ENCODE measurements at regions of chr16 and their contacts with region 1.

Region 1: DNA sequence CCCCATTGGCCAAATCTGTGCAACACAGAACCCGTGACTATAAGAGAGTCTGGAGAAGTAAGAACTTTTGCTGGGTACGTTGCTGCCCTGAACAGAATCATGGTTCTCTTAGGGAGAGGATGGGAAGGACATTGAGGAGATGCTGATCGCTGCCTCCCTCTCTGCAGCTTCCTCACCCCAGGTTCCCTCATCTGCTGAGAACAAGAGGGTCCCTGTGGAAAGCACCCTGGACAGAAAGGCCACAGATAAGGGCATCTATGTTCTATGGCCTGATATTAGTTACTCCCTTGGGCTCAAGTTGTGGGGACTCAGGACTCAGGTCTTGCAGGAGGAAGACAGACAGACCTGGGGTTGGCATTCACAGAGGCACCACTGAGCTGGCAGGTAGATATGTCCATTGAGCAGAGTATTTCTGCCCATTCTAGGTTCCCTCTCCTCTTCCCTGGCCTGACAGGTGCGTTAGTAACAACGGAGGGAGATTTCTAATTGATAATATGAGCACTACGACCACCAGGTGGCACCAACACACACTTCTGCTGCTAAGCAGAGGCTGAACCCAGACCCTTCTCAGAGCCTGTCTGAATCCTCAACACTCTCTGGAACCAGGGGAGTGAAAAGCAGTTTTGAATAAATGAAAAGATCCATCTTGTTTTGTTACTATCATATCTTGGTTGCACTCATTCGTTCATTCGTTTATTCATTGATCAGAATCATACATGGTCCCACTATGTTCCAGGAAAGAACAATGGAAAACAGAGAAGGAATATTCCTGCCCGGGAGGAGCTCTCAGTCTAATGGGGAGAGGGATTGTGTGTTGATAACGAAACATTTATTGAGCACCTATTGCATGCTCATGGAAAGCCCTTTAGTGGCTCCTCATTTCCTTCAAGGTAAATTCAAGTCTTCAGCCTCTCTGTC is 56.4 kb downstream of the SLC6A2 start:
- DNase-seq: peak; percentile 78
- ATAC-seq: peak; percentile 81

Region 2: DNA sequence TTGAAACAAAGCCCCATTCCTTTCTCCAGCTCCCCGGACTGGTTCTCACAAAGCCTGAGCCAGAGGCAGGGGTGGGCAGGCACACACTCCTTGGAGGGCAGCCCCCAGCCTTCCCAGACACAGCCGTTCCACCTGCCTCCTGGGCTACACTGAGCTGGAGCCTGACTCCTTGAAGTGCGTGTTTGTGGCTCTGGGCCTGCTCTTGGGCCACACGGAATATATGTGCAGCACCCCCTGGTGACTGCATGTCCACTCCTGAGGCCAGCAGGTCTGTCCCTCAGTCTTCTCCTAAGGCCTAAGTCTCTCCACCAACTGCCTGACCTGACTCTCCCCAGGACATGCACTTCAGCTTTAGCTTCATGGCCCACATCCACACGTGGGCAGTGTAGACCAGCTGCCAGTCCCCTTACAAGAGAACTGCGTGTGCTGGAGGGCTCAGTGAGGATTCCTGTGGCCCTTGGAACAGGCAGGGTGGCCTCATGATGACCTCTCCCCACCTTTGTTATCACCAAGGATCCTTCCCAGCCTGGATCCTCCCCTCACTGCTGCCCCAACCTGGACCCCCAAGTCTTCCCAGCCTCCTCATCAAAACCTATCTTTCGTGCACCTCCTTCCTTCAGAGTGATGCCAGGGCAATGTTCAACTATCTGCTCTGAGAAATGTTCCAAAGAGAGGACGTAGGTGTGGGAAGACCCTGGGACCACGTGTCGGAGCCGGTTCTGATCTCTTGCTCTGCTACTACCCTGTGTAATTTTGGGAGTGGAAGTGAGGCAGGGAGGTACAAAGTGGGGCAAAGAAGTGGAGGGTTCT is 68.9 kb before region 1 on chr16:
- intact Hi-C with region 1: no loop called
- DNase-seq: no peak
- ATAC-seq: no peak

Region 3: DNA sequence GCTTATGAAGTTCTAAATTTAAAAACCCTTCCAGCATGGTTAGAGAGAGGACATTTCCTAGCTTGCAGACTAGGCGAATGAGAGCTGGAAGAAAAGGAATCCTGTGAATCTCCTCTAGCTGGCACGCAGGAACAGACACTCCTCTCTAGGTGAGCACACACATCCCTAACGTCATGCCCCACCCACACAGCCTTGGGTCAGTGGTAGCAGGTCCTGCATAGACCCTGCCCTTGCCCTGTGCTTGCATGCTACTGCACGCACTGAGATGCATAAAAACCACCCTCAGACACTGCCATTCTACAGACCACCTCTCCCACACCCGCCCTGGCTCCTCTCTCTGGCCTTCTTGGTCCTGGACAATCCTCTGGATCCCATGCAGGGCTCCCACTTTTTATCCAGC is 97.2 kb after region 1 on chr16:
- intact Hi-C with region 1: no loop called
- DNase-seq: no peak
- ATAC-seq: no peak

Region 4: DNA sequence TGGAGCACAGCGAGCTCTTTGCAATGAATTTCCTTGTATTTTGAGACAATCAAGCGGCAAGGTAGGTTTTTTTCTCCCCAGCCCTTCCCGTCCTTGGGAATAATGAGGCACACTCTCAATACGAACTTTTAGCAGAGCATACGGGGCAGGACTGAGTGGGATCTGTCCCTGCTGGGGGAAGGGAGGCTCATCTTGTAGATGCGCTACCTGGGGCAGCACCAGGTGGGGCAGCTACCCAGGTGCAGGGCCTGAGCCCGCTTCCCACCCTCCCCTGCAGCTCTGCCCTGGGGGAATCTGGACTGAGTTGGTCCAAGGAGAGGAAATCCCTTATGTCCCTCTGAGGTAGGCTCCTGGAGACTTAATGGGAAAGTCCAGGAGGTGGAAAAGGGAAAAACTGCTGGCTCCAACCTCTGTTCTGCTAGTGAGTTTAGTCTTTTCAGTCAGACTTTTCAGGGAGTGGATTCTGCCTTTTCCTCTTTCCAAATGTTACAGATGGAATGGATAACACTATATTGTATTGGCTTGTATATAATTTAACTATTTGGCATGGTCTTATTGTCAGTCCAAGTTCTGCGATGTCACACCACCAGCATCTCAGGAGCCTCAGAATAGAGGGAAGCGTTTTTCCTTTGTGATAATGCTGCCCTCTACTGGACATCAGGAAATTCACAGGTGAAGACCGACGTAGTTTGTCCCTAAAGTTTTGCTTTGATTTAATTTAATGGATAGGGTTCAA is 130.3 kb after region 1 on chr16:
- intact Hi-C with region 1: loop called (anchors 2 kb)
- DNase-seq: no peak
- ATAC-seq: peak; percentile 67

Measured in left ventricle myocardium superior (tissue), 1 donor.